Activated naive CD4-positive, alpha-beta T cell treated with anti-CD3 and anti-CD28 coated beads for 36 hours (primary cell): ENCODE measurements at regions of chr16 and their contacts with region 1.

Region 1: DNA sequence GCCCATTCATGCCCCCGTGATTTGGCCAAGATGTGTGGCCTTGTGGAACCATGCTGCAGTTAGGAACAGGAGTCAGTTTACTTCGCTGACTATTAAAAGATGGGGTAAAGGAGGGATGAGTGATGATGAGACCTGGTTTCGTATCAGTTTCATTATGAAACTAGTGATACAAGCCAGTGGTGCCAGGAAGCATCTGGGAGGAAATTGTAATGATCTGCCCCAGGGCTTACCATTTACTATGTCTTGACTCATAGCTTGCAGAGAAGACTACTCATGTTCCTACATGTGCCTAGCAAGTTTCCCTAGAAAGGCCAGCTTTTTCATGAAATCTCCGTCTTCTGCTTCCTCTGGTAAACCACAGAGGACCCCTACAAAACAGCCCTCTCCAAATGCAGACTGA is 23.2 kb downstream of the CDH3 start:
- DNase-seq: peak; percentile 77
- H3K4me3 Mint-ChIP-seq: no peak overlapping the region
- H3K27ac Mint-ChIP-seq: peak overlapping the region; percentile 77
- H3K4me1 Mint-ChIP-seq: peaks cover 24% of the 10 kb centered on the region
- H3K27me3 Mint-ChIP-seq: peaks cover 7% of the 10 kb centered on the region

Region 2: DNA sequence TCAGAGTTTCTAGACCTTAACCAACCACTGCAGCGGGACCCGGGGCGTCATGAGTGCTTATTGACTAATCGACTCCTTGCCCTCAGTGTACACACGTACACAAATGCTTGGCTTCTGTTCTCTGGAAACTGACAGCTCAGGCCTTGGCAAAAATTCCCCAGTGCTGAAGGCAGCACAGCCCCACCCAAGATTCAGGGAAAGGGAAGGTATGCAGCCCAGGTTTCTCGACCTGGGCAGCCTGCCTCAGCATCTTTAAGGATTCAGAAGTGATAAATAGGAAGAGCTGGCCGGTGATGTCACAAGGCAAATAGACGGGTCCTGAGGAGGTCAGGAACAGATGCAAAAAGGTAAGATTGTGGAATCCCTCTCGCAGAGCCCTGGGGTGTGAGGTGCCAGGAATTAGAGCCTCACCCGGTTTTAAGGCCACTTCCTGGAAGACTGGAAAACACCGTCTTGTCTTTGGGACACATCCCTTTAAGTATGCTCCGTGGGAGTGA is 32.2 kb before region 1 on chr16:
- CTCF ChIA-PET with region 1: no interaction called
- intact Hi-C with region 1: loop called (anchors 2 kb)
- DNase-seq: no peak
- H3K4me3 Mint-ChIP-seq: no peak overlapping the region
- H3K27ac Mint-ChIP-seq: no peak overlapping the region
- H3K4me1 Mint-ChIP-seq: peaks cover 10% of the 10 kb centered on the region
- H3K27me3 Mint-ChIP-seq: peaks cover 9% of the 10 kb centered on the region